Activated CD4-positive, alpha-beta T cell treated with anti-CD3 and anti-CD28 coated beads, Interleukin-2, amount 10 ng/mL, durations not matched to agents 7 days and 5 days (primary cell): ENCODE measurements at regions of chr15 and their contacts with region 1.

Region 1: DNA sequence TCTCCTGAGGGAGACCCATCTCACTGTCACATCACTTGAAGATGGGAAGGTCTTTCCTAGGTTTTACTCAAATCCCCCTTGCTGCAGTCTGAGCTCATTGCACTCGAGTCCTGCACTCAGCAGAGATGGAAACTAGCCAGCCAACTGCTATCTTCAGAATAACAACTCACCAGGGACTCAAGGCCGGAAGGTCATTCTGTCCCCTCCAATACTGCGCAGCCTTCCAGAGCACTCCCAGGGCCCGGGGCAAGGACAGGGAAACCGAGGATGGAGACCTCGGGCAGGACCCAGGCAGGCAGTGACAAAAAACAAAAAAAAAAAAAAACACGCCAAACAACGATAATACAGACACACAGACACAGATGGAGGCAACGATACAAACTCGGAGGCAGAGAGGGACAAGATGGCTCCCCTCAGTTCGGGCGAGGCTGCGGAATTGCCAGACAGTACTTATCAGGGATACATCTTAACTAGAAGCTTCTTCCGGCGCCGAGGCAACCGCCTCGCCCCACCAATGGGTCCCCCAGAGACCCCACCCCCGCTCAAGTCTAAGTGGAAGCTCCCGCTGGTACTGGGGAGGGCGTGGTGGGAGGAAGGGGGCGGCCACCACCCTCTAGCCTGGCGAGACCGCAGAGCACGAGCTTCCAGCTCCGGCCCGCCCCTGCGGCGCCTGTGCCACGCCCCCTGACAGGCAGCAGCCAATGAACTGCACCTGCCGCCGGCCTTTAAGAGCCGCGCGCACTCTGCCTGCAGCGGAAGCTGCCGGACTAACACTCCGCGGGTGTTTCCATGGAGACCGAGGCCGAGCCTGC is 7.0 kb upstream of the MAP1A start:
- DNase-seq: peak; percentile 98
- H3K4me3 Mint-ChIP-seq: peak overlapping the region; percentile 96
- H3K27ac Mint-ChIP-seq: peak overlapping the region; percentile 99
- H3K4me1 Mint-ChIP-seq: peaks cover 54% of the 10 kb centered on the region
- H3K27me3 Mint-ChIP-seq: peaks cover 7% of the 10 kb centered on the region

Region 2: GRCh38 chr15:43440721-43441281 is 69.6 kb before region 1 on chr15:
- CTCF ChIA-PET with region 1: interaction called, 14 read pairs
- POLR2A ChIA-PET with region 1: no interaction called
- DNase-seq: peak; percentile 54
- H3K4me3 Mint-ChIP-seq: no peak overlapping the region
- H3K27ac Mint-ChIP-seq: peak overlapping the region; percentile 73
- H3K4me1 Mint-ChIP-seq: peaks cover 7% of the 10 kb centered on the region
- H3K27me3 Mint-ChIP-seq: no peaks in the 10 kb centered on the region

Region 3: GRCh38 chr15:43492673-43493601 is 17.5 kb before region 1 on chr15 and contains the start of gene TP53BP1:
- CTCF ChIA-PET with region 1: interaction called, 11 read pairs
- POLR2A ChIA-PET with region 1: no interaction called
- DNase-seq: peak; percentile 97
- H3K4me3 Mint-ChIP-seq: peak within 1 kb of the TSS; percentile 89
- H3K27ac Mint-ChIP-seq: peak within 1 kb of the TSS; percentile 89
- H3K4me1 Mint-ChIP-seq: peaks cover 32% of the 10 kb centered on the region
- H3K27me3 Mint-ChIP-seq: no peaks in the 10 kb centered on the region
- total RNA-seq, gene TP53BP1: 22.9 to 27.9 TPM

Region 4: GRCh38 chr15:43499635-43500034 is 10.8 kb before region 1 on chr15:
- CTCF ChIA-PET with region 1: interaction called, 11 read pairs
- POLR2A ChIA-PET with region 1: no interaction called
- DNase-seq: no peak
- H3K4me3 Mint-ChIP-seq: no peak overlapping the region
- H3K27ac Mint-ChIP-seq: no peak overlapping the region
- H3K4me1 Mint-ChIP-seq: no peaks in the 10 kb centered on the region
- H3K27me3 Mint-ChIP-seq: no peaks in the 10 kb centered on the region

Region 5: DNA sequence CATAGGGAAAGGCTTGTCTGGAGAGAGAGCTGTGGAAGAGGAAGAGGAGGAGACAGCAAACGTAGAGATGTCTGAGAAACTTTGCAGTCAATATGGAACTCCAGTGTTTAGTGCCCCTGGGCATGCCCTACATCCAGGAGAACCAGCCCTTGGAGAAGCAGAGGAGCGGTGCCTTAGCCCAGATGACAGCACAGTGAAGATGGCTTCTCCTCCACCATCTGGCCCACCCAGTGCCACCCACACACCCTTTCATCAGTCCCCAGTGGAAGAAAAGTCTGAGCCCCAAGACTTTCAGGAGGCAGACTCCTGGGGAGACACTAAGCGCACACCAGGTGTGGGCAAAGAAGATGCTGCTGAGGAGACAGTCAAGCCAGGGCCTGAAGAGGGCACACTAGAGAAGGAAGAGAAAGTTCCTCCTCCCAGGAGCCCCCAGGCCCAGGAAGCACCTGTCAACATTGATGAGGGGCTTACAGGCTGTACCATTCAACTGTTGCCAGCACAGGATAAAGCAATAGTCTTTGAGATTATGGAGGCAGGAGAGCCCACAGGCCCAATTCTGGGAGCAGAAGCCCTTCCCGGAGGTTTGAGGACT is 13.9 kb after region 1 on chr15:
- CTCF ChIA-PET with region 1: interaction called, 59 read pairs
- POLR2A ChIA-PET with region 1: interaction called, 5 read pairs
- DNase-seq: no peak
- H3K4me3 Mint-ChIP-seq: no peak overlapping the region
- H3K27ac Mint-ChIP-seq: no peak overlapping the region
- H3K4me1 Mint-ChIP-seq: peaks cover 23% of the 10 kb centered on the region
- H3K27me3 Mint-ChIP-seq: no peaks in the 10 kb centered on the region